GM23248 (cell line): ENCODE measurements at regions of chr6 and their contacts with region 1.

Region 1: DNA sequence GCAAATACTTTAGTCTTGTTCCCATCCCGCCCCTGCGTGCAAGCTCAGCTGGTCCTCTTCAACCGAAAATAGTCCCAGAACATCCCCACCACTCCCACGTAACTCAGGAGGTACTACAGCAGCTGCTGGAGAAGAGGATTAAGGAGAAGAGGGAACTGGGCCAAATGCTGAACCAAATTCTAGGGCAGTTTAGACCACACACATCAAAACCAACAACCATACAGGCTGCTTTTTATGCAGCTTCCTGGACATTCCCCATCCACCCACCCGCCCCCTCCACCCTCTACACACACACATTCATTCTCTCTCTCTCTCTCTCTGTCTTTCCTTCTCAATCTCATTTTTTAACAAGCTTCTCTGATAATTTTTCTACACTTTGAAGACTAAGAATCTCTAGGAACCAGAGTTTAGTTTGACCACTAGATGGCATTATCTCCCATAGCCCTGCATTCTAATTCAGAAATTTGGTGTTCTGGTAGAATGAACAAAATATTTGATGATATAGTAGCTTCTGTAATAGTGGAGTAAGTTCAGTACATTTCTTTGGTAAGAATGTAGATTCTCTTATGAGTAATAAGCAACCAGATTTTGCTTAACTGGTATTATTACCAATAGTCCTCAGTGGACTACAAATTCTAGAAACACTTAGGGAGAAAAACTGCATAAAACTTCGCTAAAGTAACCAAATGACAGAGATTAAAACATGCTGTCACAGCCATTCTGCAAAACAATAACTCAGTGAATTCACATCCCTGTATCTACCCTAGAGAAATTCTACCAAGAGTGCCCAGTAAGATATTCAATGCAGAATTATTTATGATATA is 52.1 kb upstream of the BEND6 start:
- DNase-seq: peak; percentile 74
- H3K4me3 ChIP-seq: peak overlapping the region; percentile 31
- H3K27ac ChIP-seq: peak overlapping the region; percentile 45
- H3K4me1 ChIP-seq: peaks cover 53% of the 10 kb centered on the region
- H3K27me3 ChIP-seq: no peaks in the 10 kb centered on the region

Region 2: GRCh38 chr6:56188429-56188828 is 714.4 kb before region 1 on chr6:
- in situ Hi-C with region 1: no loop called
- DNase-seq: no peak
- H3K4me3 ChIP-seq: no peak overlapping the region
- H3K27ac ChIP-seq: no peak overlapping the region
- H3K4me1 ChIP-seq: no peaks in the 10 kb centered on the region
- H3K27me3 ChIP-seq: no peaks in the 10 kb centered on the region

Region 3: GRCh38 chr6:57038906-57039515 is 136.2 kb after region 1 on chr6:
- in situ Hi-C with region 1: loop called (anchors 10 kb)
- DNase-seq: no peak
- H3K4me3 ChIP-seq: no peak overlapping the region
- H3K27ac ChIP-seq: no peak overlapping the region
- H3K4me1 ChIP-seq: no peaks in the 10 kb centered on the region
- H3K27me3 ChIP-seq: no peaks in the 10 kb centered on the region

Region 4: GRCh38 chr6:57177545-57178265 is 274.9 kb after region 1 on chr6:
- in situ Hi-C with region 1: no loop called
- DNase-seq: peak; percentile 67
- H3K4me3 ChIP-seq: peak overlapping the region; percentile 54
- H3K27ac ChIP-seq: peak overlapping the region; percentile 54
- H3K4me1 ChIP-seq: peaks cover 51% of the 10 kb centered on the region
- H3K27me3 ChIP-seq: no peaks in the 10 kb centered on the region

Region 5: DNA sequence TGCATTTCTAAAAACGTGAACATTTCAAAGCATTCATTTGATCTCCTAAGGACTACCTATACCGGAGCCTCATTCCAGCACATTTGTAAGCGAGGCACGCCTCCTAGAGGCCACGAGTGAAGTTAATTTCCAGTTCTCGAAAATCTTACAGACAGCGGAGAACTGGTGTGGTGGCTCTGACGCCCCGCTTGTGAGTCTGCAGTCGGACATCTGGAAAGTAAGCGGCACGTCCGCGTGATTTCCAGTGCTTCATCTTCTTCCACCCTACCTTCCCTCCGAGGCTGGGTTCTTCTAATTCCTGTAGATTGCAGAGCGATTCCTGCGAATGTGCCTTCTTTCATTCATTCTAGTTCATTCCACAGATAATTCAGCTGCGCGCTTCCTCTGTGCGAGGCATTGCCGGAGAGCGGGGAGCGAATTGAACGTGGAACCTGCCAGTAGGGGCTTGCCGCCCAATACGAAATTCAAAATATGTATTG is 413.8 kb after region 1 on chr6:
- in situ Hi-C with region 1: loop called (anchors 25 kb)
- DNase-seq: peak; percentile 95
- H3K4me3 ChIP-seq: peak overlapping the region; percentile 89
- H3K27ac ChIP-seq: peak overlapping the region; percentile 66
- H3K4me1 ChIP-seq: peaks cover 62% of the 10 kb centered on the region
- H3K27me3 ChIP-seq: no peaks in the 10 kb centered on the region